B cell (primary cell): ENCODE measurements at regions of chr17 and their contacts with region 1.

Region 1: GRCh38 chr17:41992576-41992975 is 24.7 kb downstream of the DNAJC7 start:
- DNase-seq: no peak
- ATAC-seq: no peak
- H3K4me3 ChIP-seq: no peak overlapping the region
- H3K4me3 Mint-ChIP-seq: no peak overlapping the region
- H3K27ac ChIP-seq: no peak overlapping the region
- H3K27ac Mint-ChIP-seq: no peak overlapping the region
- H3K4me1 ChIP-seq: peaks cover 20 to 27% of the 10 kb centered on the region in 2 donors
- H3K4me1 Mint-ChIP-seq: peaks cover 22% of the 10 kb centered on the region
- H3K27me3 ChIP-seq: no peaks in the 10 kb centered on the region
- H3K27me3 Mint-ChIP-seq: no peaks in the 10 kb centered on the region
- CTCF ChIP-seq: no peak

Region 2: DNA sequence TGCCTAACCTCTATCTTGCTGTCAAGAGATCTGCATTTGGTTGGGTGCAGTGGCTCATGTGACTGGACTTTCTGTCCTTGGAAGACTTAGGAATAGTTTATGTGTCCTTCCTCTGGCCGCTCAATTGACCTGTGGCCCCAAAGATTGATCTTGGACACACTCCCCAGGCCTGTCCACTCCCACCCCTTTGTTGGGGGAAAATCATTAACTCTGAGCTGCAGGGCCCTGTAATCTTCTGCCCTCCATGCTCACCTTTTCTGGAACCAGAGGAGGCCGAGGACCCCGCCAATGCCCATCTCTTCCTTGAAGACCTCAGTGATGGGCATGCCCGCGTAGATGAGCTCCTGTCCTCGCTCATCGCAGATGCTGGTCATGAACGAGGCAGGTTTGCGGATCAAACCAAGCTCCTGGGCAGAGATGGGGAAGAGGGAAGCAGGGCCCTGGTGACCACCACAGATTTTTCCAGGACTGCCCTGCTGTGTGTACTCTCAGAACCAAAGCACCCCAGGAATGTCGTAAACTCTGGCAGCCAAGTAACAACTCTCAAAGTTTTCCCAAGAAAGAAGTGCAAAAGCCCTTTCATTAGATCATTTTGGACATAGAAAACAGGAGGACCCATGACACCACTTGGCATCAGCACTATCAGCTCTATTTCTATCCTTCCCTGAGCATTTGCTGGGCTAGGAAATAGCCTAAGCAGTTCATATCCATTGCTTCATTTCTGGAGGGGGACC is 118.8 kb before region 1 on chr17:
- CTCF ChIA-PET with region 1: no interaction called
- POLR2A ChIA-PET with region 1: no interaction called
- intact Hi-C with region 1: no loop called
- DNase-seq: no peak
- ATAC-seq: no peak
- H3K4me3 ChIP-seq: no peak overlapping the region
- H3K4me3 Mint-ChIP-seq: no peak overlapping the region
- H3K27ac ChIP-seq: no peak overlapping the region
- H3K27ac Mint-ChIP-seq: no peak overlapping the region
- H3K4me1 ChIP-seq: no peaks in the 10 kb centered on the region
- H3K4me1 Mint-ChIP-seq: no peaks in the 10 kb centered on the region
- H3K27me3 ChIP-seq: no peaks in the 10 kb centered on the region
- H3K27me3 Mint-ChIP-seq: no peaks in the 10 kb centered on the region
- CTCF ChIP-seq: no peak

Region 3: GRCh38 chr17:41972571-41973411 is 19.8 kb before region 1 on chr17:
- CTCF ChIA-PET with region 1: interaction called, 5 read pairs
- POLR2A ChIA-PET with region 1: interaction called, 16 read pairs
- intact Hi-C with region 1: no loop called
- DNase-seq: peak; percentile 60
- ATAC-seq: peak; percentile 95
- H3K4me3 ChIP-seq: no peak overlapping the region
- H3K4me3 Mint-ChIP-seq: peak overlapping the region; percentile 38
- H3K27ac ChIP-seq: peak overlapping the region; percentile 23 to 47
- H3K27ac Mint-ChIP-seq: peak overlapping the region; percentile 76
- H3K4me1 ChIP-seq: peaks cover 12 to 48% of the 10 kb centered on the region in 2 donors
- H3K4me1 Mint-ChIP-seq: peaks cover 45% of the 10 kb centered on the region
- H3K27me3 ChIP-seq: no peaks in the 10 kb centered on the region
- H3K27me3 Mint-ChIP-seq: no peaks in the 10 kb centered on the region
- CTCF ChIP-seq: no peak

Region 4: DNA sequence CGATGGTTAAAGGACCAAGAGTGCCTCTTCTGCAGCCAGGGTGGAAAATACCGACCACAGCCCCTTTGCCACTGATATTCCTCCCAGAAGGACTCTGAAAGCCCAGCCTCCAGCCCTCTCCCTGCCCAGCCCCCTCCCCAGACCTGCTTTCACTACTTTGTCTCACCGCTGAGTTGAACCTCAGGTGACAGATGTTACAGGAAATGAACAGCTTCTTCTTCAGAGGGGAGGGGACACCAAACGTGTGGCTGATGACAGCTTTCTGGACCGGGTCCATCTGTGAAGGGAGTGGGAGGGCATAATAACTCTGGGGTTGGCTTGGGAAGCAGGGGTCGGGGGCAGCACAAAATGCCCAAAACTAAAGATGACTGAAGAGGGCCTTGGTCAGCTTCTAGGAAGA is 41.5 kb after region 1 on chr17:
- CTCF ChIA-PET with region 1: no interaction called
- POLR2A ChIA-PET with region 1: no interaction called
- intact Hi-C with region 1: no loop called
- DNase-seq: no peak
- ATAC-seq: no peak
- H3K4me3 ChIP-seq: no peak overlapping the region
- H3K4me3 Mint-ChIP-seq: no peak overlapping the region
- H3K27ac ChIP-seq: no peak overlapping the region
- H3K27ac Mint-ChIP-seq: no peak overlapping the region
- H3K4me1 ChIP-seq: no peaks in the 10 kb centered on the region
- H3K4me1 Mint-ChIP-seq: no peaks in the 10 kb centered on the region
- H3K27me3 ChIP-seq: peaks cover 0 to 6% (median 0%) of the 10 kb centered on the region in 4 experiments
- H3K27me3 Mint-ChIP-seq: peaks cover 6% of the 10 kb centered on the region
- CTCF ChIP-seq: no peak